Activated T-helper 1 cell treated with anti-CD3 and anti-CD28 coated beads, Interleukin-12 subunit alpha, Interleukin-12 subunit beta, Interleukin-2, Interleukin-4 antibody, amounts not matched to agents 30 ng/mL and 10 ng/mL and 1 ng/mL, durations not matched to agents 14 hours and 24 hours and 36 hours (primary cell): ENCODE measurements at regions of chr4 and their contacts with region 1.

Region 1: DNA sequence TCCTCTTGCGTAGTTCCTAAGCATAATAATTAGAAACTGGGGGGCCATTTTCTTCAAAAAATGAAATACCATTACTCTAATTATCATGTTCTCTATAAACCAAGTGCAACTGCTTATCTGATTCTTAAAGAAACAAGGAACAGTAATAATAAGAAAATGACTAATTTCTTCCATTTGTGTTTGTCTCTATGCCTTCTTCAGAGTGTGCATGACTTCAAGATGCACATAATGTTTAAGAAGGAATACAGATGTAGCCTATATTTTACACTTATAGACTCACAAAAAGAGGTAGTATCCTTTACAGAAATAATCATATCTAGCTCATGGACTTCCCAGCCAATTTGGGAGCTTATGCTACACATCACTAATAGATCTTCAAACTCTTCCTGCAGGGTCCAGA is 131.7 kb downstream of the CHRNA9 start:
- DNase-seq: no peak
- H3K4me3 Mint-ChIP-seq: no peak overlapping the region
- H3K27ac Mint-ChIP-seq: peak overlapping the region; percentile 72
- H3K4me1 Mint-ChIP-seq: peaks cover 28% of the 10 kb centered on the region
- H3K27me3 Mint-ChIP-seq: no peaks in the 10 kb centered on the region

Region 2: GRCh38 chr4:39118034-39118658 is 1348.6 kb before region 1 on chr4:
- intact Hi-C with region 1: no loop called
- DNase-seq: peak; percentile 28
- H3K4me3 Mint-ChIP-seq: peak overlapping the region; percentile 38
- H3K27ac Mint-ChIP-seq: peak overlapping the region; percentile 78
- H3K4me1 Mint-ChIP-seq: peaks cover 52% of the 10 kb centered on the region
- H3K27me3 Mint-ChIP-seq: no peaks in the 10 kb centered on the region

Region 3: DNA sequence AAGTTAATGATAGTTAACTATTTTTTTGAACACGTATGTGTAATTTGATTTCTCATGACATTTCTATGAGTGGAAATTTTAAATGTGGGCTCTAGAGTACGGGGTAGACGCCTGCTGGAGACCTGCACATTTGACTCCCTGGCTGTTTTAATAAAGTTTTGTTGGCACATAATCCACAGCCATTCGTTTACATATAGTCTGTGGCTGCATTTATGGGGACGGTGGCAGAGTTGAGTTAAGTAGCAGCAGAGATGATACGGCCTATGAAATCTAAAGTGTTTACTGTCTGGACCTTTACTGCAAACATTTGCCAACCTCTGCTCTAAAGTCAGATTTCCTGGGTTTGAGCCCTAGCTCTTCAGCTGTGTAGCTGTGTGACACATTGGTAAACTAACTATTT is 12.9 kb before region 1 on chr4:
- intact Hi-C with region 1: loop called (anchors 2 kb)
- DNase-seq: no peak
- H3K4me3 Mint-ChIP-seq: no peak overlapping the region
- H3K27ac Mint-ChIP-seq: no peak overlapping the region
- H3K4me1 Mint-ChIP-seq: peaks cover 39% of the 10 kb centered on the region
- H3K27me3 Mint-ChIP-seq: no peaks in the 10 kb centered on the region

Region 4: GRCh38 chr4:40662962-40663604 is 196.3 kb after region 1 on chr4:
- intact Hi-C with region 1: loop called (anchors 2 kb)
- DNase-seq: no peak
- H3K4me3 Mint-ChIP-seq: no peak overlapping the region
- H3K27ac Mint-ChIP-seq: peak overlapping the region; percentile 81
- H3K4me1 Mint-ChIP-seq: peaks cover 31% of the 10 kb centered on the region
- H3K27me3 Mint-ChIP-seq: peaks cover 1% of the 10 kb centered on the region

Region 5: DNA sequence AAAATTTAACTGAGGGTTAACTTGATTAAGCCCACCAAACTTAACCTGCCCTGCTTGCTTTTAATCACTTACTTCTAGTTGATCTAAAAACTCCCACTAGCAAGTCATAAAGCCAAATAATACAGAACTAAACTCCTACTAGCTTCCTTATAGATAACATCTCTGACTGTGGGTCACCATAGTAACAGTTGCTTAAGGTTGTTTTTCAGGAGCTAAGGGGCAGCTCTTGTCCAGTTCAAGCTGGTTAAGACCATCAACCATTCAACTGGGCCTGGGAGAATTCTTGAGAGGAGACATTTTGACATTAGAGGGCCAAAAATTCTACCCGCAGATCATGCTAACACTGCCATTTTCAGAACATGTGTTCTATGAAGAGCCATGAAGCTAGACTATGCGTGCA is 856.9 kb after region 1 on chr4:
- intact Hi-C with region 1: no loop called
- DNase-seq: no peak
- H3K4me3 Mint-ChIP-seq: no peak overlapping the region
- H3K27ac Mint-ChIP-seq: no peak overlapping the region
- H3K4me1 Mint-ChIP-seq: no peaks in the 10 kb centered on the region
- H3K27me3 Mint-ChIP-seq: no peaks in the 10 kb centered on the region